ENCODE measurements at regions of chr17 and their contacts with region 1.

Region 1: GRCh38 chr17:29369831-29370735 is 20.1 kb upstream of the TAOK1 start:
- DNase-seq: no peak
- H3K4me3 ChIP-seq: no peak overlapping the region
- H3K27me3 ChIP-seq: no peaks in the 10 kb centered on the region
- CTCF ChIP-seq: peak; percentile 57

Region 2: DNA sequence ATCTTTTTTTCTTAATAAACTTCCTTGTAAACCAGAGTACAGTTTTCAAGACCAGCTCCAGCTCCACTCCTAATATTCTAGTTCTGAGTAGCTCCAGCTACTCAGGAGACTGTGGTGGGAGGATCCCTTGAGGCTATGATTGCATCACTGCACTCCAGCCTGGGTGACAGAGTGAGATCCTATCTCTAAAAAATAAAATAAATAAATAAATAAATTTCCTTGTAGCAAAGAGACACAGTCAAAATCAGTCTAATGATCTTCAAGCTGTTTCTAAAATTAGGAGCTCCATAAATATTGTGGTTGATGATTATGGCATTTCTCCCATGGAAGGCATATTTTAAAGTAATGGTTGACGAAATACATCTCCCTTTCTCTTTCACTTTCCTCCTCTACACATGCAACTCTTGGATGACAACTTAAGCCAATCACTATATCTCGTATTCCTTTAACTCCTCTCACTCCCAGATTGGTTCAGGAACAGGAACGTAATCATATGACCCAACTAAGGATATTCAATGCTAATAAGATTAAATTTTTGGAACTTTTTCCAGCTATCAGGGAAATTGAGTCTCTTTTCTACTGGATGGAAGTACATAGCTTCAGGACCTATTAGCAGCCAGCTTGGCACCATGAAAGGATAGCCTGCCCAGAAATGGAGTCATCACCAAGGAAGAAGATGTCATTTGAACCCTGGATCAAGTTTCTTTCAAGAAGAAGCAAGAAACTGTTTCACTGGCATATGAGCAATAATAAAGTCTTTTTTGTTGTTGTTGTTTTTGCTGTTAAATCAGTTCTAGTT is 22.1 kb before region 1 on chr17:
- CTCF ChIA-PET with region 1: interaction called, 14 read pairs
- POLR2A ChIA-PET with region 1: no interaction called
- DNase-seq: peak; percentile 44
- H3K4me3 ChIP-seq: no peak overlapping the region
- H3K27me3 ChIP-seq: peaks cover 8% of the 10 kb centered on the region
- CTCF ChIP-seq: no peak

Region 3: DNA sequence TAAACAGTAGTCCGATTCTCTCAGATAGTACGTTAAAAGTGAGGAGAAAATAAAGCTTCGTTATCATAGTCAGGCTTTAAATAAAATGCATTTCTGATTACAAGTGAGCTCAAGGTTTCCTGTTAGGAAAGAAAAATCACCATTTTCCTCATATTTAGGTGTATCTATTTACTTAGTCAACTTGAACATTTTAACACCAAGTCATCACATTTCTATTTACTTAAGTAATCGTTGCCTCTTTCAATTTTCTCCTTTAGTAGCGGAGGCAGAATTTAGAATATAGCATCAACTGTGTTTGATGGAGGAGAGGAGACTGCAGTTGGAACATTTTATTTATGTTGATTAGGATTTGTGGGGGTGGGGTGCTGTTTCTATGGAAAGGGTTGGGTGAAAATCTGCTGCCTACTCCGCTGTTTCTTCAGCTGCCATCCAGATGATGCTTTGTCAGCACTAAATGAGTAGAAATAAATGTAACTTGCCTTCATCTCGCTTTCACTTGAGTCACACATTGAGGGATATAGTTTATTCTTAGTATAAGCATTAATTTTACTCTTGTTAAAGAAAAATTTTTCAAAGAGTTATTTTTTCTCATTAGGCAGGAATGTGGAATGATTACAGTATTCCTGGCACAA is 154.5 kb after region 1 on chr17:
- CTCF ChIA-PET with region 1: interaction called, 12 read pairs
- POLR2A ChIA-PET with region 1: no interaction called
- DNase-seq: no peak
- H3K4me3 ChIP-seq: no peak overlapping the region
- H3K27me3 ChIP-seq: no peaks in the 10 kb centered on the region
- CTCF ChIP-seq: no peak

Region 4: GRCh38 chr17:29549177-29549923 is 179.3 kb after region 1 on chr17:
- CTCF ChIA-PET with region 1: interaction called, 15 read pairs
- POLR2A ChIA-PET with region 1: no interaction called
- DNase-seq: no peak
- H3K4me3 ChIP-seq: no peak overlapping the region
- H3K27me3 ChIP-seq: no peaks in the 10 kb centered on the region
- CTCF ChIP-seq: no peak

Region 5: DNA sequence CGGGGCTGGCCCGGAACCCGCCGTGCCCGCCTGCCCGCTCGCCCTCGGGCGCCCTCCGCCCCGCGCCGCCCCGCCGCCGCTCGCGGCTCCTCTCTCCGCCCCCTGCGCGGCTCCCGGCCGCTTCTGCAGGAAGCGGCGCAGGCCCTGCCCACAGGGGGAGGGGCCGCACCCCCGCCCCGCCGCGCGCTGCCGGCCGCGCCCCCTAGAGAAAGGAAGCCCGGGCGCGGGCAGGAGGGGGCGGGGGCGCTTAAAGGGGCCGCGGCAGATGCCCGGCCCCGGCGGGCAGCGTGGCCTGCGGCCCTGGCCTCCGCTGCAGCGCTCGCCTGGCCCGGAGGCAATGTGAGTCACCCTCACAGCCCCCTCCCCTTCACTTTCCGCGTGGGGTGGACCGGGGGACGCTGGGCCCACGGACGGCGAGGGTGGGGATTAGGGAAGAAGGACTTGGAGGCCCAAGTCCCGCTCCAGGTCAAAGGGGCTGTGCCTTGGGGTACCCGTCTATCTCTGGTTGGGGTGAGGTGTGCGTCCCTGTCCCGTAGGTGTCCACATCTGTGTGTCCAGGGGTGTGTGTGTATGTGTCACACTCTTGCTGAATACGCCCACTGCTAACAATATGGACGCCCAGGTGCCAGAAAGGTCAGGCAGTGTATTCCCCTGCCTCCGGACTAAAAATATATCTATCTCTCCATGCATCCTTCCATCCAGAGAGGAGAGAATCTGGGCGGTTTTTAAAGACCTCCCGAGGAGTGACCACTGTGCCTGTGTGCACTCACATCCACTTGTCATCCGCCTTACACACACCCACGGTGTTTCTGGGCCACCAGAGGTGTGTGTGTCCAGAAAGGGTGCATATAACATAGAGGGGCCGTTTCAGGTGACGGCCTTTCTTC is 219.7 kb after region 1 on chr17 and contains the start of gene GIT1:
- CTCF ChIA-PET with region 1: interaction called, 20 read pairs
- POLR2A ChIA-PET with region 1: no interaction called
- DNase-seq: no peak
- H3K4me3 ChIP-seq: peak within 1 kb of the TSS; percentile 79
- H3K27me3 ChIP-seq: no peaks in the 10 kb centered on the region
- CTCF ChIP-seq: no peak
- polyA plus RNA-seq, gene GIT1: 21.6 and 32.0 TPM in 2 replicates